ENCODE measurements at regions of chr9 and their contacts with region 1.

Region 1: GRCh38 chr9:73104342-73104741 is 47.3 kb upstream of the ANXA1 start:
- DNase-seq: no peak
- ATAC-seq: no peak
- H3K4me3 Mint-ChIP-seq: no peak overlapping the region
- H3K27ac Mint-ChIP-seq: no peak overlapping the region
- H3K4me1 Mint-ChIP-seq: no peaks in the 10 kb centered on the region
- H3K27me3 Mint-ChIP-seq: peaks cover 7% of the 10 kb centered on the region

Region 2: GRCh38 chr9:72931437-72931836 is 172.9 kb before region 1 on chr9:
- CTCF ChIA-PET with region 1: no interaction called
- POLR2A ChIA-PET with region 1: no interaction called
- DNase-seq: no peak
- ATAC-seq: no peak
- H3K4me3 Mint-ChIP-seq: no peak overlapping the region
- H3K27ac Mint-ChIP-seq: no peak overlapping the region
- H3K4me1 Mint-ChIP-seq: no peaks in the 10 kb centered on the region
- H3K27me3 Mint-ChIP-seq: no peaks in the 10 kb centered on the region

Region 3: GRCh38 chr9:73073337-73074175 is 30.8 kb before region 1 on chr9:
- CTCF ChIA-PET with region 1: no interaction called
- POLR2A ChIA-PET with region 1: no interaction called
- DNase-seq: no peak
- ATAC-seq: no peak
- H3K4me3 Mint-ChIP-seq: no peak overlapping the region
- H3K27ac Mint-ChIP-seq: no peak overlapping the region
- H3K4me1 Mint-ChIP-seq: no peaks in the 10 kb centered on the region
- H3K27me3 Mint-ChIP-seq: peaks cover 36% of the 10 kb centered on the region

Region 4: GRCh38 chr9:73093740-73094379 is 10.5 kb before region 1 on chr9:
- CTCF ChIA-PET with region 1: interaction called, 13 read pairs
- POLR2A ChIA-PET with region 1: no interaction called
- DNase-seq: no peak
- ATAC-seq: no peak
- H3K4me3 Mint-ChIP-seq: no peak overlapping the region
- H3K27ac Mint-ChIP-seq: no peak overlapping the region
- H3K4me1 Mint-ChIP-seq: no peaks in the 10 kb centered on the region
- H3K27me3 Mint-ChIP-seq: peaks cover 4% of the 10 kb centered on the region

Region 5: GRCh38 chr9:73132034-73132776 is 27.9 kb after region 1 on chr9:
- CTCF ChIA-PET with region 1: interaction called, 18 read pairs
- POLR2A ChIA-PET with region 1: no interaction called
- DNase-seq: peak; percentile 84
- ATAC-seq: peak; percentile 95
- H3K4me3 Mint-ChIP-seq: peak overlapping the region; percentile 79
- H3K27ac Mint-ChIP-seq: peak overlapping the region; percentile 93
- H3K4me1 Mint-ChIP-seq: peaks cover 34% of the 10 kb centered on the region
- H3K27me3 Mint-ChIP-seq: no peaks in the 10 kb centered on the region

Region 6: DNA sequence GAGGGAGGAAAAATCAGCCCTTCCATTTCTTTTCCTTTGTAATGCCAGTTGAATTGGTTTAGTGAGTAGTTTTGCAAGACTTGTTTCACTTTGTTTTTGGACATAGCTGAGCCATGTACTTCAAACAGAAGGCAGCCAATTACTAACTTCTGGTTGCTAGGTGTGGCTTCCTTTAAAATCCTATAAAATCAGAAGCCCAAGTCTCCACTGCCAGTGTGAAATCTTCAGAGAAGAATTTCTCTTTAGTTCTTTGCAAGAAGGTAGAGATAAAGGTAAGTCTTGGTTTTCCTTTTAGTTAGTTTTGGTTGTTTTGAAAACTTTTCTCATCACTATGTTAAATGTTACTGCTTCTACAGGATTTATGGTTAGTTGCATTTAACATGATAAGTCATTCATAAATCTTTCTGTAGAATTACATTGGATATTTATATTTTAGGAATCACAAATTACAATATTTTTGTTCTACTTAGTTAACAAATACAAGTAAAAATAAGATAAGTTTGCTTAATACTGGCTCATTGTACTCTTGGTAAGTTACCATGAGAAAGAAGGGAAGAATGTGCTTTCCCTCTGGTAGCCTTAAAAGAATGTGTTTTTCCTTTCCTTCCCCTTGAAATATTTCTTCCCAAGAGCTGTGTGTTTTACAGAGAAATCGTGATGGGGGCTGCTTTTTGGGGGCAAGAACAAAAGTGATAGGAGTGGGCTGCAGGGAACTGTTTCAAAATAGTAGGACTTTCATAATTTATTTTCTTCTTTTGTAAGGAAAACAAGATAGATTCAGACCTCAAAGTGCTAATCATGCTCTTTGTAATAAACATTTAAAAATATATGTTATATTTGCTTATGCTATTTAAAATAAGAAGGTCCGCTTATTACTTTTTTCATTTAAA is 47.6 kb after region 1 on chr9 and contains the start of gene ANXA1:
- CTCF ChIA-PET with region 1: interaction called, 12 read pairs
- POLR2A ChIA-PET with region 1: no interaction called
- DNase-seq: no peak
- ATAC-seq: peak; percentile 59
- H3K4me3 Mint-ChIP-seq: peak within 1 kb of the TSS; percentile 88
- H3K27ac Mint-ChIP-seq: peak within 1 kb of the TSS; percentile 86
- H3K4me1 Mint-ChIP-seq: peaks cover 76% of the 10 kb centered on the region
- H3K27me3 Mint-ChIP-seq: no peaks in the 10 kb centered on the region
- total RNA-seq, gene ANXA1: 88.2 to 90.8 TPM

Region 7: GRCh38 chr9:73183917-73184861 is 79.8 kb after region 1 on chr9:
- CTCF ChIA-PET with region 1: interaction called, 124 read pairs
- POLR2A ChIA-PET with region 1: no interaction called
- DNase-seq: no peak
- ATAC-seq: no peak
- H3K4me3 Mint-ChIP-seq: no peak overlapping the region
- H3K27ac Mint-ChIP-seq: no peak overlapping the region
- H3K4me1 Mint-ChIP-seq: no peaks in the 10 kb centered on the region
- H3K27me3 Mint-ChIP-seq: peaks cover 16% of the 10 kb centered on the region

Measured in activated CD8-positive, alpha-beta T cell treated with anti-CD3 and anti-CD28 coated beads, Interleukin-2, amount 10 ng/mL, durations not matched to agents 7 days and 5 days (primary cell).